HepG2 (cell line): ENCODE measurements at regions of chr10 and their contacts with region 1.

Region 1: DNA sequence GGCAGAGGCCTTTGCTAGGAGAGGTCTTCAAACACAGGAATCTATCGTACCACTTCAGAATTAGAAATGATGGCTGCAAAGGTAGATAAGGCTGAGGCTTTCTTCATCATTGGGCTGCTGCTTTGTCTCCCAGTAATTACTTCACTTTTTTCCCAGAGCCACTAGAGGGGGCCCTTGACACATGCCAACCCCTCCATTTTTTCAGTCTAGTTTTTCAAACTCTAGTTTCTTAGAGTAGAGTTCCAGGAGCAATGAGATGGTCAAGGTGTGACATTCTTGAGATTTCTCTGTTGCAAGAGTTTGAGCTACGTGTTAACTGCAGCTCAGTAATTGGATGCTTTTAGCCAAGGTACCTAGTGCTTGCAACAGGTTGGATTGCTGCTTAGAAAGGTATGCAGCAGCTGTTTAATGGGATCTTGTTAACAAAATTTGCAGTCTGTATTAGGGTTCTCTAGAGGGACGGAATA is 33.8 kb upstream of the RBM20 start:
- DNase-seq: peak; percentile 44
- ATAC-seq: peak; percentile 79
- H3K4me3 ChIP-seq: no peak overlapping the region
- H3K27ac ChIP-seq: no peak overlapping the region
- H3K4me1 ChIP-seq: no peaks in the 10 kb centered on the region
- H3K27me3 ChIP-seq: no peaks in the 10 kb centered on the region; a peak in 1 of 5 replicates
- CTCF ChIP-seq: peak; percentile 79
- EP300 ChIP-seq: no peak
- POLR2A ChIP-seq: no peak
- RAD21 ChIP-seq: peak; percentile 72; the same call in 1 of the 2 replicates

Region 2: GRCh38 chr10:110671788-110672579 is 61.6 kb after region 1 on chr10:
- CTCF ChIA-PET with region 1: interaction called, 7 read pairs
- POLR2A ChIA-PET with region 1: no interaction called
- in situ Hi-C with region 1: loop called (anchors 5 kb)
- intact Hi-C with region 1: loop called (anchors 2 kb)
- DNase-seq: peak; percentile 49
- ATAC-seq: peak; percentile 100
- H3K4me3 ChIP-seq: peak overlapping the region; percentile 55 to 79 (median 62)
- H3K27ac ChIP-seq: no peak overlapping the region
- H3K4me1 ChIP-seq: 0 out of 2 replicates have a peak, but pooled peaks cover 4% of the 10 kb centered on the region
- H3K27me3 ChIP-seq: peaks cover under 1 to 36% of the 10 kb centered on the region in 2 experiments; a peak in 2 of 5 replicates
- CTCF ChIP-seq: peak; percentile 77
- EP300 ChIP-seq: no peak
- POLR2A ChIP-seq: no peak
- RAD21 ChIP-seq: peak; percentile 38; the same call in 1 of the 2 replicates

Region 3: GRCh38 chr10:110681023-110681681 is 70.8 kb after region 1 on chr10:
- CTCF ChIA-PET with region 1: interaction called, 10 read pairs
- POLR2A ChIA-PET with region 1: no interaction called
- in situ Hi-C with region 1: no loop called
- intact Hi-C with region 1: loop called (anchors 1 kb)
- DNase-seq: peak; percentile 32
- ATAC-seq: peak; percentile 94
- H3K4me3 ChIP-seq: no peak overlapping the region
- H3K27ac ChIP-seq: no peak overlapping the region
- H3K4me1 ChIP-seq: 0 out of 2 replicates have a peak, but pooled peaks cover 5% of the 10 kb centered on the region
- H3K27me3 ChIP-seq: peaks cover 0 to 12% of the 10 kb centered on the region in 2 experiments; a peak in 3 of 5 replicates
- CTCF ChIP-seq: peak; percentile 69
- EP300 ChIP-seq: no peak
- POLR2A ChIP-seq: no peak
- RAD21 ChIP-seq: no peak

Region 4: DNA sequence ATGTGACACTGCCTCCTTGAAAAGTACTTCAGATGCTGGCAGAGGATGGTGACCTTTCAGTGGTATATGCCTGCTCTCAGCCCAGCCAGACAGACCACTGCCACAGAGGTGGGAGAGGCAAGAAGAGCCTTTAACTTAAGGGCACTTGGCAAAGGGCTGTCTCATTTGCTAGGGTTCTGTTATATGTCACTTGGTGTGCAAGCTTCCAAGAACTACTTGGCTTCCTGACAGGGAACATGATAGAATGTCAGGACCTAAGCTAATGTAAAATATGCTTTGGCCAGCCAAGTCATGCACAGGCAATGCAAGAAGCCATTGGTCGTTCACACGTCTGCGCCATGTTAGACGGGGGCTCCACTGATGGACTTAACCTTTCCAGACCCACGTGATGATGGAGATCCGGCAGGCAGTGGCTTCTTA is 88.5 kb after region 1 on chr10:
- CTCF ChIA-PET with region 1: no interaction called
- POLR2A ChIA-PET with region 1: no interaction called
- in situ Hi-C with region 1: no loop called
- intact Hi-C with region 1: no loop called
- DNase-seq: no peak
- ATAC-seq: no peak
- H3K4me3 ChIP-seq: no peak overlapping the region
- H3K27ac ChIP-seq: no peak overlapping the region
- H3K4me1 ChIP-seq: no peaks in the 10 kb centered on the region
- H3K27me3 ChIP-seq: peaks cover 0 to 3% of the 10 kb centered on the region in 2 experiments; a peak in 1 of 5 replicates
- CTCF ChIP-seq: no peak
- EP300 ChIP-seq: no peak
- POLR2A ChIP-seq: no peak
- RAD21 ChIP-seq: no peak